Psoas muscle (tissue), 8 donors: ENCODE measurements at regions of chr12 and their contacts with region 1.

Region 1: DNA sequence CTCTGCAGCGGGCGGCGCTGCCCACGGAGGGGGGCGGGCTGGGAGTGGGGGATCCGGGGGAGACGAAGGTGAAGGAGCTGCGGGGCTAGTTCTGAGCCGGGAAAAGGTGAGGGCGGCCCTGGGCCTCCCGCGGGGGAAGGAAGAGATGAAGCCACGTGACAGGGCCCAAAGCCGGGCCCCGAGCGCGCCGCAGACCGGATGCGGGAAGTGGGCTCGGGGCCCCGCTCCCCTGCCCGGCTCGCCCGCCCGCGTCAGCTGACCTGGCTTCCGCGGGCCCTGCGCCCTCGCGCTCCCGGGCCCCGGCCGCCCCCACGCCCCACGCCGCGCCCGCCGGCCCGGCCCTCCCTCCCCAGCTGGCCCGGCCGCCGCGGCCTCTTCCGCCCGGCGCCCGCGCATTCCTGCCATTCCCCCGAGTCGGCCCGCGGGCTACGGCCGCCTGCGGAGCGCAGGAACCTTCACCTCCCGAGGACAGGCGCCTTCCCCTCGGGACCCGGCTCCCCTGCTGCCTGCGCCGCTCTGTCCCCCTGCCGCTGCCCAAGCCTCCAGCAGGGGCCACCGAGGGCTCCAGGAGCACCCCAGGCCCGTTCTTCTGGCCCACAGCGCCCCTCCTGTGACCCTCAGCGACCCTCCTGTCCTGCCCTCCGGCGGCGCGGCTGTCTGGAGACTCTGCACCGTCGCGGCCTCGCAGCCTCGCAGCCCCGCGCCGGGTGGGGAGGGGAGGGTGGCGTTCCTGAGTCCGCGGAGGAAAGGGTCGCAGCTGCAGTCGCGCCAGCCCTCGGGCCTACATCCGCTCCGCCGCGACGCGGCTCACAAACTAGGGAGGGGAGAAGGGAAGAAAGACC is 20.4 kb downstream of the NINJ2 start:
- DNase-seq: peak; percentile 88 to 89
- ATAC-seq: peak; percentile 51 to 81 (median 62)
- H3K4me3 ChIP-seq: peak overlapping the region; percentile 87
- H3K27ac ChIP-seq: peak overlapping the region; percentile 100
- H3K4me1 ChIP-seq: peaks cover 69% of the 10 kb centered on the region
- H3K27me3 ChIP-seq: no peaks in the 10 kb centered on the region
- CTCF ChIP-seq: peak; percentile 31

Region 2: DNA sequence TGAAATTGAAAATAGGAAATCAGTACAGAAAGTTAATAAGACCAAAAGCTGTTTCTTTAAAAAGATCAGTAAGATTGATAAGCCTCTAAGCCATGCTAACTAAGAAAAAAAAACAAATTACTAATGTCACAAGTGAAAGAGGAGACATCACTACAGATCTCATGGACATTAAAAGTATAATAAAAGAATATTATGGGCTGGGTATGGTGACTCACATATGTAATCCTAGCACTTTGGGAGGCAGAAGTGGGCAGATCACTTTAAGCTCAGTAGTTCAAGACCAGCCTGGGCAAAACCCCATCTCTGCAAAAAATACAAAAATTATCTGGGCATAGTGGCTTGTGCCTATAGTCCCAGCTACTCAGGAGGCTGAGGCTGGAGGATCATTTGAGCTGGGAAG is 152.6 kb before region 1 on chr12:
- intact Hi-C with region 1: no loop called
- DNase-seq: no peak
- ATAC-seq: no peak
- H3K4me3 ChIP-seq: no peak overlapping the region
- H3K27ac ChIP-seq: no peak overlapping the region
- H3K4me1 ChIP-seq: no peaks in the 10 kb centered on the region
- H3K27me3 ChIP-seq: no peaks in the 10 kb centered on the region
- CTCF ChIP-seq: no peak

Region 3: DNA sequence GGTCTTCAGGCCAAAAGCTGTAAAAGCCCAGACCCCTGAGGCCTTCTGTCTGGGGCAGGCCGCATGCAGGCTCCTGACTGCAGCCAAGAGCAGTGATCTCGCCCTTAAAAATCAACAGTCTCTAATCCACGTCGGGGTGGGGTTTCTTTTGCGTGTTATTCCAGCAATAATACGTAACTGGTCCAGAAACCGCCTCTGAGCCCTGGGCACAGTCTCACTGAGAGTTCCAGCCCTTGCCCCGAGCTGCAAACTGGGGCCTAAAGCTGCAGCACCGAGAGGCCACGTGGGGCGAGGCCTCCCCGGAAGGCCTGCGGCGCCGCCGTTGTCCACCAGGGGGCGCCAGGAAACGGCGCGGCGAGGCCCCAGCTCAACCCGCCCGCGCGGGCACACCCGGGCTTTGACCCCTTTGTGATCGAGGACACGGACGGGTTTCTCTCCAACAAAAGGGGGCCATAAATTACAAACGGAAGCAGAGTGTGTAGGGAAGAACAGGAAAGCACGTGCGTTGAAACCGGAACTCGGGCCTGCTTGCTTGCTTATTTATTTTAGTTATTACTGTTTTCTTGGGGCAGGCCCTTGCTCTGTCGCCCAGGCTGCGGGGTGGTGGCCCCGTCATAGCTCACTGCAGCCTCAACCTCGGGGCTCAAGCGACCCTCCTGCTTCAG is 66.8 kb before region 1 on chr12:
- intact Hi-C with region 1: loop called (anchors 5 kb)
- DNase-seq: peak; percentile 84 to 91
- ATAC-seq: peak; percentile 72 to 80 (median 78)
- H3K4me3 ChIP-seq: peak overlapping the region; percentile 48
- H3K27ac ChIP-seq: peak overlapping the region; percentile 67
- H3K4me1 ChIP-seq: peaks cover 43% of the 10 kb centered on the region
- H3K27me3 ChIP-seq: no peaks in the 10 kb centered on the region
- CTCF ChIP-seq: peak; percentile 100

Region 4: GRCh38 chr12:716506-716905 is 73.7 kb after region 1 on chr12:
- intact Hi-C with region 1: loop called in 1 of 2 experiments (anchors 5 kb)
- DNase-seq: no peak
- ATAC-seq: peak; percentile 51 to 74 (median 68)
- H3K4me3 ChIP-seq: no peak overlapping the region
- H3K27ac ChIP-seq: peak overlapping the region; percentile 92
- H3K4me1 ChIP-seq: peaks cover 21% of the 10 kb centered on the region
- H3K27me3 ChIP-seq: no peaks in the 10 kb centered on the region
- CTCF ChIP-seq: no peak

Region 5: GRCh38 chr12:810671-811415 is 168.0 kb after region 1 on chr12:
- intact Hi-C with region 1: loop called in 1 of 2 experiments (anchors 10 kb)
- DNase-seq: no peak
- ATAC-seq: no peak
- H3K4me3 ChIP-seq: no peak overlapping the region
- H3K27ac ChIP-seq: peak overlapping the region; percentile 12
- H3K4me1 ChIP-seq: peaks cover 36% of the 10 kb centered on the region
- H3K27me3 ChIP-seq: no peaks in the 10 kb centered on the region
- CTCF ChIP-seq: no peak

Region 6: GRCh38 chr12:949453-950191 is 306.8 kb after region 1 on chr12 and contains the start of gene RAD52:
- intact Hi-C with region 1: loop called in 1 of 2 experiments (anchors 10 kb)
- DNase-seq: peak; percentile 98 to 99
- ATAC-seq: peak; percentile 93 to 94 (median 94)
- H3K4me3 ChIP-seq: peak within 1 kb of the TSS; percentile 95
- H3K27ac ChIP-seq: peak within 1 kb of the TSS; percentile 97
- H3K4me1 ChIP-seq: peaks cover 21% of the 10 kb centered on the region
- H3K27me3 ChIP-seq: no peaks in the 10 kb centered on the region
- CTCF ChIP-seq: peak; percentile 99
- total RNA-seq, gene RAD52: 6.7 to 12.8 (median 9.2) TPM

Region 7: DNA sequence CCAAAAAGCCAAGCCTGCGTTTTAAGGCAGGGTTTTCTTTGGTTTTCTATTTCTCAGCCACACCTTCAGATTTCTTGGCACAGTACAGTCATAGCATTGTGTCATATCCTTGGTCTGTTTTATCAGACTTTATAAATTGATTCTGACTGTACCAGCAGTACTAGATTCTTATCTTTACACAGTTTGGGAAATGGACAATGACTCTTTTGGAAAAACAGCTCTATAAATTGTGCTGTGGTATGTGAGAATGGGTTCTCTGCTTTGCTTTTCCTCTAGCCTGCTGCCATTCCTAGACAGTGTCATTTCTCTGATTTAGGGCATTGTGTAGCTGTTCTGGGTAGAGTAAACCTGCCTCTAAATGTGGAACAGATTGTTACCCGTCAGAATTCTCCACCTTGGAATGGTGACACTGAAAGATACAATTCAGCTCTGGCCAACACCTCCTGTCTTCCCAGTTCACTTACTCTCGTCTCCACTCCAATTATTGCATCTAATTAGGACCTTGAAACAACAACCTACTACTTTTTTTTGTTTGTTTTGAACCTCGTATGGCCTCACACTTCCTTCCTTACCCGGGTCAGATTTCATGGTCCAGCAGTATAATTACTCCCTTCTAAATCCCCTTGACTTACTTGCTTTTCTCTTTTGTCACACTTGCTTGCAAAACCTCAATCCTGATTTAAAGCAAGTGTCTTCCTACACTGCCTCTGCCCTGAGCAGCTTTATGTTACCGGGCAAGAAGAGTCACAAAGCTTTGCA is 574.5 kb after region 1 on chr12:
- intact Hi-C with region 1: loop called in 1 of 2 experiments (anchors 5 kb)
- DNase-seq: no peak
- ATAC-seq: peak; percentile 76 to 89 (median 80)
- H3K4me3 ChIP-seq: peak overlapping the region; percentile 22
- H3K27ac ChIP-seq: peak overlapping the region; percentile 75
- H3K4me1 ChIP-seq: peaks cover 29% of the 10 kb centered on the region
- H3K27me3 ChIP-seq: no peaks in the 10 kb centered on the region
- CTCF ChIP-seq: no peak